ENCODE measurements at regions of chr19 and their contacts with region 1.

Region 1: GRCh38 chr19:35612559-35613321 is at the start of gene HAUS5:
- DNase-seq: peak; percentile 95 to 97
- H3K4me3 ChIP-seq: peak within 1 kb of the TSS; percentile 94
- H3K4me3 Mint-ChIP-seq: peak within 1 kb of the TSS; percentile 89
- H3K27ac Mint-ChIP-seq: peak within 1 kb of the TSS; percentile 93
- H3K4me1 ChIP-seq: 0 out of 2 replicates have a peak, but pooled peaks cover 4% of the 10 kb centered on the region
- H3K4me1 Mint-ChIP-seq: peaks cover 9% of the 10 kb centered on the region
- H3K27me3 ChIP-seq: no peaks in the 10 kb centered on the region
- H3K27me3 Mint-ChIP-seq: no peaks in the 10 kb centered on the region
- CTCF ChIP-seq: no peak
- total RNA-seq, gene HAUS5: 26.4 and 27.9 TPM in 2 replicates

Region 2: DNA sequence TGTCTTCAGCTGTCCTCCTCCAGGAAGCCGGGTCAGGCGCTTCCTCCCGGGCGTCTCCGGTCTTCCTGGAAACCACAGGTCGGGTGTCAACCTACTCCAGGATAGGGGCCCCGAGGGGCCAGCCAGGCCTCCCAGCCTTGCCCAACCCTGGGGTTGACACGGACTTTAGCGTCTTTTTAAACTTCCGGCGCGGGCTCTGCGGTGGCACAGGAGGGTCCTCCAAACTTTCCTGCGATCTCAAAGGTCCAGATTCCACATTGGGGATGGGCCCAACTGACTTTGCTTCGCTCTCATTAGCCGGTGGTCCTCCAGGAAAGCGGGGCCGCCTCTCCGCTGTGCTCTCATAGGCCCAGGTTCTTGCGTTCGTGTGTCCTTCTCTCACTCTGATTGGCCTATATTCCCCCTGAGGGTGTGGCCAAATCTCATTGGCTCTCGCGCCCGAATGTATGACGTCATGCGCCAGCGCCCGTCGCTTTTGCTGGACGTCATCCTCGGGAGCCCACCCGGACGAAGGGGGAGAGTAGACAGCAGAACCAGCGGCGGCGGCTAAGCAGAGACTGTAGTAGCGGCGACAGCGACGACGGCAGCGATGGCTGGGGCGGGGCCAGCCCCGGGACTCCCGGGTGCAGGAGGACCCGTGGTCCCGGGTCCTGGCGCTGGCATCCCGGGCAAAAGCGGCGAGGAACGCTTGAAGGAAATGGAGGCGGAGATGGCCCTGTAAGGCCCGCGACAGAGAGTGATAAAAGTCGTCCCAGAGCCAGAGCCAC is 16.0 kb after region 1 on chr19 and contains the start of gene RBM42:
- CTCF ChIA-PET with region 1: interaction called, 5 read pairs
- POLR2A ChIA-PET with region 1: no interaction called
- intact Hi-C with region 1: loop called (anchors 1 kb)
- DNase-seq: peak; percentile 99
- H3K4me3 ChIP-seq: peak within 1 kb of the TSS; percentile 90
- H3K4me3 Mint-ChIP-seq: peak within 1 kb of the TSS; percentile 100
- H3K27ac Mint-ChIP-seq: peak within 1 kb of the TSS; percentile 100
- H3K4me1 ChIP-seq: no peaks in the 10 kb centered on the region
- H3K4me1 Mint-ChIP-seq: peaks cover 7% of the 10 kb centered on the region
- H3K27me3 ChIP-seq: no peaks in the 10 kb centered on the region
- H3K27me3 Mint-ChIP-seq: no peaks in the 10 kb centered on the region
- CTCF ChIP-seq: no peak
- total RNA-seq, gene RBM42: 140 and 165 TPM in 2 replicates

Measured in Caco-2 (cell line).